ENCODE measurements at regions of chr2 and their contacts with region 1.

Region 1: DNA sequence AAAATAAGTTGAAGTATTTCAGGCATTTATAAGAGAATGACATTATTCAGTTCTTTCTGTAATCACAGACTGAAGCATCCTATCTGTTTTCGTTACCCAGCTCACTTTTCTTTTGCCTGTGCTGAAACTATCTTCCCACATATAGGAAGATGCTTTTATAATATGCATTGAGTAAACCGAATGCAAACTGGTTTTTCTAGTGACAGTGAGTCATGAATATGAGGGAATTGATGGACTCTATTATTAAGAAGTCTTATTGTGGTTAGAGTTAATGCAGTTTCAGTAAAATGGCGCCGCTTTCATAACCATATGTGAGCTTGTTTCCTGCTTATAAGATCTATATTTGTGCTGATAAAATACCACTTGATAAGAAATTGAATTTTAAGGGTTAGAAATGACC is 59.2 kb downstream of the ACVR2A start:
- DNase-seq: no peak
- H3K4me3 ChIP-seq: no peak overlapping the region
- H3K27ac ChIP-seq: no peak overlapping the region
- H3K4me1 ChIP-seq: peaks cover 0 to 34% (median 27%) of the 10 kb centered on the region in 4 donors
- H3K27me3 ChIP-seq: no peaks in the 10 kb centered on the region
- CTCF ChIP-seq: no peak
- EP300 ChIP-seq: no peak
- POLR2A ChIP-seq: no peak

Region 2: DNA sequence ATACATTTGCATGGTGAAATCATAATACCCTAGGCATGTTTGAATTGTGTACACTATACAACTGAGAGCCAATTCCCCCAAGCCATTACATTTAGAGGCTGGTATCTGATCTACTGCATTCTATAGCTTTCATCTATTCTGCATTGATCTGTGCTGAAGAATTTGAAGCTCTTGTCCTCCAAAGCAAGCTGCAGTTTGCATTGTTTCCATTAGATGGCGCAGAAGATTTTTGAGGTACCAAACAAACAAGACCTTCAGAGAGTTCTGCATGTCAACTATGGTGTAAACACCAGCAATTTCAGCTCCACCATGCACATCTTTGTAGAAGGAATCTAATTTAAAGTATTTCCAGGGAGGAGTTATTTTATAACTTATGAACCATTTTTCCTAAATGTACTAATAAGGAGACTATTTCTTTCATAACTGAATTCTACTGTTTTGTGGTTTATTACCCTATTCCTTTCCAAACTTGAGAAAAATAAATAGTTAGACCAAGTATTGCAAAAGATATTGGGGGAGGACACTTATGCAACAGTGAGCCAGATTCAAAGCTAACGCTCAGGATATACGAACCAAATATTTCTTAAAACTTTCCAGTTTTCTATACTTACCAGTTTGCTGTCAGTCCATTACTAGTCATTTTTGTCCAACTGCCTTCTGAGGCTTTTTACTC is 821.1 kb before region 1 on chr2:
- intact Hi-C with region 1: loop called (anchors 10 kb)
- DNase-seq: no peak
- H3K4me3 ChIP-seq: no peak overlapping the region
- H3K27ac ChIP-seq: peak overlapping the region in 1 of 4 donors; percentile 62
- H3K4me1 ChIP-seq: peaks cover 0 to 22% (median 13%) of the 10 kb centered on the region in 4 donors
- H3K27me3 ChIP-seq: no peaks in the 10 kb centered on the region
- CTCF ChIP-seq: peak; percentile 68 to 90 (median 75)
- EP300 ChIP-seq: no peak
- POLR2A ChIP-seq: no peak

Region 3: DNA sequence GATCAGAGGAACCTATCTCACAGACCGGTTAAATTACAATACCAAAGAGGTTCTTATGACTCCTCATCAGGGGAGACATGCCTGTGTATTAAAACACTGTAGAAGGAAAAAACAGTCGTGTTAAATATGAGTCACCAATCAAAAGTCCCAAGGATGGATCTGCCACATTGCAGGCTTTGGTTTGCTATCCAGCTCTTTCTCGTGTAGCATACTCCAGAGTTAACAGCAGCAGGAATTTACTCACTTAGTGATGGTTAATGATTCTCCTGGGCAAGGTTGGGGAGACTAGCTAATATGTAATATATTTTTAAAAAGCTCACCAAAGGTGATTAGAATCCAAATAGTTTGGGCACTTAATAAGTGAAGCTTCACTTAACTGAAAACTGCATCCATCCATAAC is 226.5 kb after region 1 on chr2:
- intact Hi-C with region 1: no loop called
- DNase-seq: no peak
- H3K4me3 ChIP-seq: no peak overlapping the region
- H3K27ac ChIP-seq: peak overlapping the region in 1 of 4 donors; percentile 5
- H3K4me1 ChIP-seq: peaks cover 0 to 36% (median 26%) of the 10 kb centered on the region in 4 donors
- H3K27me3 ChIP-seq: no peaks in the 10 kb centered on the region
- CTCF ChIP-seq: no peak
- EP300 ChIP-seq: no peak
- POLR2A ChIP-seq: no peak

Region 4: DNA sequence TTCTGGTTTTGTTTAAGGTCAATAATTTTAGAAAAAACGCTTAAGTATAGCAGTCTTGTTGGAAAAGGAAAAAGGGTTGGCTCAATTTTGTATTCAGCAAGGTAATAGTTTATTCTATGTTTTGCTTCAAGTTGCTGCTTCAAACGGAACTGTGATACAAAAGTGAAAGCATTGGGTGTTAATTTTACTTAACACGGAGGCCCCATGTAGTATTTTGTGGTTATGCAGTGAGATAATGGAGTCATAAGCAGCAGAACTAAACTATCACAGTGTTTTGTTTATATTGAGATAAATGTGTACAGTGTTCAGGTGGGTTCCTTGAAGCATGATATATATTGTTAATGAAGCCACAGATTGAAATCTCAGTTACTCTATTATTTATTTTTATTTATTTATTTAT is 1067.5 kb after region 1 on chr2:
- intact Hi-C with region 1: no loop called
- DNase-seq: no peak
- H3K4me3 ChIP-seq: no peak overlapping the region
- H3K27ac ChIP-seq: no peak overlapping the region
- H3K4me1 ChIP-seq: peaks cover 0 to 17% (median 7%) of the 10 kb centered on the region in 4 donors
- H3K27me3 ChIP-seq: no peaks in the 10 kb centered on the region
- CTCF ChIP-seq: no peak
- EP300 ChIP-seq: no peak
- POLR2A ChIP-seq: no peak